IMR-90 (cell line): ENCODE measurements at regions of chr6 and their contacts with region 1.

Region 1: DNA sequence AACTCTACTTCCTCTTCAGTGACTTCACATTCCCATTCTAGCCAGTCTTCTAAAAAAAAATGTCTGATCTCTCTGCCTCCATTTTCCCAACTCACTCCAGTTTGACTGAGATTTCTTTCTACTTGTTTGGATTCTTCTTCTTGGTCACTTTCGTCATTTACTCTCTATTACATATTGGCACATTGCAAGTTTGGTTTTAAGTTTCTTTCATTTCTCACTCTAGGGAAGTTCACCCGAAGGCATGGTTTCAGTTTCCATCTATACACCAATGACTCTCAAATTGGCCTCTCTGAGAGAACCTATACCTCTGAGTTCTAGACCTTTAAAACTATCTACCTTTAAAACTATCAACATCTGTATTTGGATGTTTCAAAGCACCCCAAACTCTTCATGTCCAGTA is 51.3 kb downstream of the CD109 start:
- DNase-seq: no peak
- ATAC-seq: no peak
- H3K4me3 ChIP-seq: no peak overlapping the region
- H3K27ac ChIP-seq: no peak overlapping the region
- H3K4me1 ChIP-seq: peaks cover 4% of the 10 kb centered on the region
- H3K27me3 ChIP-seq: no peaks in the 10 kb centered on the region
- CTCF ChIP-seq: no peak
- POLR2A ChIP-seq: no peak
- RAD21 ChIP-seq: no peak

Region 2: GRCh38 chr6:74069089-74069581 is 321.8 kb after region 1 on chr6:
- CTCF ChIA-PET with region 1: no interaction called
- POLR2A ChIA-PET with region 1: no interaction called
- dilution Hi-C with region 1: no loop called
- in situ Hi-C with region 1: no loop called
- intact Hi-C with region 1: loop called (anchors 5 kb)
- DNase-seq: peak; percentile 93
- ATAC-seq: peak; percentile 65
- H3K4me3 ChIP-seq: no peak overlapping the region
- H3K27ac ChIP-seq: no peak overlapping the region
- H3K4me1 ChIP-seq: peaks cover 13% of the 10 kb centered on the region; the same call in 1 of the 2 replicates
- H3K27me3 ChIP-seq: no peaks in the 10 kb centered on the region
- CTCF ChIP-seq: no peak
- POLR2A ChIP-seq: no peak
- RAD21 ChIP-seq: no peak